Heart left ventricle (tissue), 16 donors: ENCODE measurements at regions of chr5 and their contacts with region 1.

Region 1: GRCh38 chr5:158354958-158355357 is 496.0 kb upstream of the CLINT1 start:
- DNase-seq: no peak
- ATAC-seq: no peak
- H3K4me3 ChIP-seq: no peak overlapping the region
- H3K27ac ChIP-seq: no peak overlapping the region
- H3K4me1 ChIP-seq: no peaks in the 10 kb centered on the region
- H3K27me3 ChIP-seq: no peaks in the 10 kb centered on the region
- CTCF ChIP-seq: no peak
- POLR2A ChIP-seq: no peak

Region 2: GRCh38 chr5:158390577-158390976 is 35.6 kb after region 1 on chr5:
- intact Hi-C with region 1: no loop called
- DNase-seq: no peak
- ATAC-seq: peak in 2 of 4 donors; percentile 31 to 77
- H3K4me3 ChIP-seq: no peak overlapping the region
- H3K27ac ChIP-seq: peak overlapping the region in 1 of 12 donors; percentile 31
- H3K4me1 ChIP-seq: peaks cover 0 to 9% (median 0%) of the 10 kb centered on the region in 12 donors
- H3K27me3 ChIP-seq: no peaks in the 10 kb centered on the region
- CTCF ChIP-seq: no peak
- POLR2A ChIP-seq: no peak

Region 3: GRCh38 chr5:158658446-158659230 is 303.7 kb after region 1 on chr5:
- intact Hi-C with region 1: loop called in 1 of 10 experiments (anchors 10 kb)
- DNase-seq: no peak
- ATAC-seq: no peak
- H3K4me3 ChIP-seq: no peak overlapping the region
- H3K27ac ChIP-seq: no peak overlapping the region
- H3K4me1 ChIP-seq: no peaks in the 10 kb centered on the region
- H3K27me3 ChIP-seq: no peaks in the 10 kb centered on the region
- CTCF ChIP-seq: no peak
- POLR2A ChIP-seq: no peak